Dorsolateral prefrontal cortex (tissue), 120 donors: ENCODE measurements at regions of chr17 and their contacts with region 1.

Region 1: DNA sequence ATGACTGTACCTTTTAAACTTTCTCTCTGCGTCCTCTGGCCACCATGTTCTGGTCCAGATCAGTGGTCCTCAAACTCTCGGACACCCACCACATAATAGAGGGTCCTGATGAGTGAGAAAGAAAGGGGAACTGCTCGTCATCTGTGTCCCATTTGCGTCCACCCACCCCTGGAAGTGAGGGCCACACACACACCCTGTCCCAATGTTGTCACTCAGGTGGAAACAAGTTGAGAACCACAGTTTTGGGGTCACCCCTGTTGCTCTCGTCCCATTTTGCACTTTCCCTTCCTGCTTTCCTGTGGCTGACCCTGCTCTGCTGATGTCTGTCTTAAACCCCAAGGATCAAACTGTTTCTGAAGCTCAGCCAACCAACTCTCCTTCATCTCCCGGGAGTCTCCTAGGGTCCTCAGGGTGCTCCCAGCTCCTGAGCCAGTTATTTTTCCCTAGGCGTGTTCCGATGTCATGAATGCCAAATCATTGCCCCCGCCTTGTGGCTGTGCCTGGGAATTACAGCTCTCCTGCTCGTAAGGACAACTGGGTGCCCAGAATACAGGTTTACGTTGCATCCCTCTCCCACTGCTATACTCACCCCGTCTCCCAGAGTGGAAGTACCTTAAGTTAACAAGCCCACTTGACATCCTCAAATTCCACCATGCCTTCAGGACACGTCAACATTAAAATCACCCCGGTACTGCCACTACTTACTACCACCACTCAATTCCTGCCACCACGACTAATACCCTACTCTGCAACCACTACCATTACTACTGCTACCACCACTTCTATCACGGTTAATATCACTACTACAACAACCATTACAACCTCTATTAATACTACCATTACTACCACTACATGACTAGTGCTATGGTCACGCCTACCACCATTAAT is 26.0 kb upstream of the HNF1B start:
- DNase-seq: peak in 2 of 10 donors; percentile 33 to 46
- H3K4me3 ChIP-seq: no peak overlapping the region
- H3K27ac ChIP-seq: no peak overlapping the region
- H3K27me3 ChIP-seq: peaks cover 0 to 23% (median 0%) of the 10 kb centered on the region in 45 donors
- CTCF ChIP-seq: peak in 54 of 56 donors; percentile 21 to 63 (median 48)

Region 2: DNA sequence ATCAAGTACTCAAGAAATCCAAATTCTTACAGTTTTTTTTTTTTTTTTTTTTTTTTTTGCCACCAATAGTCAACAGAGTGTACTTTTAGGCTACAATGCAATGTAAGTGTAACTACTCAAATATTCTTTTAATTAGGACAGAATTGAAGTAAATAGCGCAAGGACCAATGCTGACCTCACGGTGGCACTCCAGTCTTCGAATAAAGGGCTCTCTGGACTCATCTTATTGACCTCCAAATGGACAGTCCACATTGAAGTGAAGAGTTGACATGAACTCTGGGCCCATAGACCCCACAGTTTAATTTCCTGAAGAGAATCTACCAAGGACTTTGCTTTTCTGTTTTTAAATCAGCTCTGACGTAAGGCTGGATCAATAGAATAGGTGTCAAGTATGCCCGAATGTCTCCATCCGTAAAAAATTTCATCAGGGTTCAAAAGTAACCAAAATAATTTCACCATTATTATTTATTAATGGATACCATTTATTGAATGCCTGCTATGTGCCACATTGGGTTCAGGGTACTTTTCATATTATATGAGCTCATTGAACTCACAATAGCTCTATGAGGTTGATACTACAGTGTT is 120.4 kb before region 1 on chr17:
- intact Hi-C with region 1: loop called in 1 of 2 experiments (anchors 5 kb)
- DNase-seq: peak in 2 of 10 donors; percentile 22 to 48
- H3K4me3 ChIP-seq: no peak overlapping the region
- H3K27ac ChIP-seq: no peak overlapping the region
- H3K27me3 ChIP-seq: peaks cover 0 to 8% (median 0%) of the 10 kb centered on the region in 45 donors
- CTCF ChIP-seq: peak in 49 of 56 donors; percentile 11 to 63 (median 35)